ENCODE measurements at regions of chr5 and their contacts with region 1.

Region 1: GRCh38 chr5:35003018-35003957 is 44.5 kb downstream of the AGXT2 start:
- H3K4me3 ChIP-seq: no peak overlapping the region
- H3K27ac ChIP-seq: no peak overlapping the region
- H3K4me1 ChIP-seq: no peaks in the 10 kb centered on the region
- CTCF ChIP-seq: peak; percentile 62; the same call in 1 of the 2 replicates

Region 2: GRCh38 chr5:34474573-34475021 is 528.7 kb before region 1 on chr5:
- CTCF ChIA-PET with region 1: interaction called, 43 read pairs
- POLR2A ChIA-PET with region 1: no interaction called
- H3K4me3 ChIP-seq: no peak overlapping the region
- H3K27ac ChIP-seq: no peak overlapping the region
- H3K4me1 ChIP-seq: no peaks in the 10 kb centered on the region
- CTCF ChIP-seq: peak; percentile 69; the same call in 1 of the 2 replicates

Region 3: DNA sequence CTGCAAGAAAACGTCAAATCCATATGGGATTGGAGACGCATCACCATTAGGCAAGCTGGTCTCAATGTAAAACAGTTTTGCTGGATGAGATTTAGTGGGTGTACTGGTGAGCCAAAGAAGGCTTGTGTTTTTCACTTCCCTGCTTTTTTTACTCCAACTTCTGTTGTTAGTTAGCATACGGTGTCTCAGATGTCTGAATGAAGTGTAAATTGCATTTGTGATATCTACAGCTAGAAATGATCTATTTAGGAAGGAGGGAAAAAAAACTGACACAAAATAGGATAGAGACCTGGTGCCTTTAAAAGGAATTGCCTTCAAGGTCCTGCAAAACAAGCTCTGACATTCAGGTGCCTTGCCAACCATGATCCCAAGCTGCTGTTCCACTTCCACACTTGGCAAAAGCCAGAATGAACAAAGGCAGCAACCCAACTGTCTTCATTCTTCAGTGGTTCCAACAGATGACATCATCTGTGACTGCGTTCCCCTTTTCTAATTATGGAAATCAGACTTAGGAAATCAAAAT is 451.3 kb before region 1 on chr5:
- CTCF ChIA-PET with region 1: no interaction called
- POLR2A ChIA-PET with region 1: no interaction called
- H3K4me3 ChIP-seq: no peak overlapping the region
- H3K27ac ChIP-seq: no peak overlapping the region
- H3K4me1 ChIP-seq: peaks cover 8% of the 10 kb centered on the region; the same call in 1 of the 2 replicates
- CTCF ChIP-seq: no peak

Region 4: DNA sequence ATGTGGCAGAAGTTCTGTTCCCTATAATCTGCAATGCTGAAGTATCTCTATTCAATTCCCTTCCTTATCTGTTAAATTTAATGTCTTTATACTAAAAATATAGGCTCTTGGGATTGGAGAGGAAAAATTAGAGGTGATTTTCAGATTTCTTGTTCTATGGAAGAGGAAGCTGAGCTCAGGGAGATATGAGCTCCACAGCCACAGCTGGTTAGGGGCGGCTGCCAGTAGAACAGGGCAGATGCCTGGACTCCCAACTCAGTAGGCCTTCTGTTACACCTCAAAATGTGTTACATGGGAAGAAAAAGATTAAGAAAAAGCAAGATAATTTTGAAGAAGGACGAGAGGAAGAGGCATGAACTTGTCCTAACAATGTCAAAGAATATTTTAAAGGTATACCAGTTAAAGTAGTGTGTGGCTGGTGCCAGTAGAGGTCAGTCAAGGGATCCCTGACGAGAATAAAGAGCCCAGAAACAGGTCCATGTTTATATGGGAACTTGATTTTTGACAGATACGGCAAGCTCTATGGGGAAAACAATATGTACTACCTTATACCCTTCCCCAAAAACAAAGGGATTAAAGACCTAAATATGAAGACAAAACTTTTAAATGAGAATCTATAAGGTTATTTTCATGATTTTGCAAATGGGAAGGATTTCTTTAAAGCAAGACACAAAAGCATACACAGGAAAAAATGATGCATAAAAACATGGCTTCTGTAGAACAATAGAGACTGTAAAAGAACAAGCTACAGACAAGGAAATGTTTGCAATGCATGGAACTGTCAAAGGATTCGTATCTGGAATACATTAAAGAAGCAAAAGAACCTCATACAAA is 45.2 kb before region 1 on chr5:
- CTCF ChIA-PET with region 1: interaction called, 38 read pairs
- POLR2A ChIA-PET with region 1: interaction called, 7 read pairs
- H3K4me3 ChIP-seq: no peak overlapping the region
- H3K27ac ChIP-seq: no peak overlapping the region
- H3K4me1 ChIP-seq: no peaks in the 10 kb centered on the region
- CTCF ChIP-seq: peak; percentile 24; the same call in 1 of the 2 replicates

Region 5: GRCh38 chr5:34991486-34992238 is 11.6 kb before region 1 on chr5:
- CTCF ChIA-PET with region 1: interaction called, 31 read pairs
- POLR2A ChIA-PET with region 1: no interaction called
- H3K4me3 ChIP-seq: no peak overlapping the region
- H3K27ac ChIP-seq: no peak overlapping the region
- H3K4me1 ChIP-seq: no peaks in the 10 kb centered on the region
- CTCF ChIP-seq: no peak

Region 6: DNA sequence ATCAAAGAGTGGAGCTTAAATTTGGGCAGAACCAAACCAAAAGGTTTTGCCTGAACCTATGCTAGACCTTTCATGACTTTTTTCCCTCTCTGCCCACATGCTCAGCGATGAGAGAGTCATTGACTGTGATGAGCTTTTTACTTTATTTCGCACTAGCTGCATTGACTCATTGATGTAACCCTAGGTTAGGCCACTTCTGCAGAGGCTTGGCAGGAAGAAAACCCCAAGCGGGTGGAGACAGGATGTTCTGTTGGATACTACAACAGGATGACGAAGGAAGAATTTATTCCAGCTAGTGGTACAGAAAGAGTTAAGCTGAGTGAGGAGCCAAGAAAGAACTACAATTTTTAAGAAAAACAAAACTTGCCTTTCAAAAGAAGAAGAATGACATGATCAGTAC is 26.0 kb after region 1 on chr5:
- CTCF ChIA-PET with region 1: interaction called, 21 read pairs
- POLR2A ChIA-PET with region 1: no interaction called
- H3K4me3 ChIP-seq: no peak overlapping the region
- H3K27ac ChIP-seq: no peak overlapping the region
- H3K4me1 ChIP-seq: no peaks in the 10 kb centered on the region
- CTCF ChIP-seq: no peak